K562 (cell line): ENCODE measurements at regions of chr6 and their contacts with region 1.

Region 1: GRCh38 chr6:90386399-90387382 is 90.0 kb upstream of the BACH2 start:
- DNase-seq: no peak
- ATAC-seq: no peak
- H3K4me3 ChIP-seq: no peak overlapping the region
- H3K27ac ChIP-seq: no peak overlapping the region
- H3K4me1 ChIP-seq: peaks cover 5 to 13% of the 10 kb centered on the region in 2 experiments; a peak in 3 of 5 replicates
- H3K27me3 ChIP-seq: no peaks in the 10 kb centered on the region
- CTCF ChIP-seq: no peak
- EP300 ChIP-seq: no peak
- POLR2A ChIP-seq: no peak
- RAD21 ChIP-seq: no peak

Region 2: GRCh38 chr6:90375681-90376439 is 10.8 kb before region 1 on chr6:
- CTCF ChIA-PET with region 1: no interaction called
- POLR2A ChIA-PET with region 1: interaction called, 10 read pairs
- in situ Hi-C with region 1: no loop called
- intact Hi-C with region 1: no loop called
- DNase-seq: no peak
- ATAC-seq: no peak
- H3K4me3 ChIP-seq: no peak overlapping the region
- H3K27ac ChIP-seq: no peak overlapping the region
- H3K4me1 ChIP-seq: peaks cover 0 to under 1% of the 10 kb centered on the region in 2 experiments; a peak in 1 of 5 replicates
- H3K27me3 ChIP-seq: no peaks in the 10 kb centered on the region
- CTCF ChIP-seq: no peak
- EP300 ChIP-seq: no peak
- POLR2A ChIP-seq: no peak
- RAD21 ChIP-seq: no peak